Brain microvascular endothelial cell (primary cell): ENCODE measurements at regions of chr2 and their contacts with region 1.

Region 1: DNA sequence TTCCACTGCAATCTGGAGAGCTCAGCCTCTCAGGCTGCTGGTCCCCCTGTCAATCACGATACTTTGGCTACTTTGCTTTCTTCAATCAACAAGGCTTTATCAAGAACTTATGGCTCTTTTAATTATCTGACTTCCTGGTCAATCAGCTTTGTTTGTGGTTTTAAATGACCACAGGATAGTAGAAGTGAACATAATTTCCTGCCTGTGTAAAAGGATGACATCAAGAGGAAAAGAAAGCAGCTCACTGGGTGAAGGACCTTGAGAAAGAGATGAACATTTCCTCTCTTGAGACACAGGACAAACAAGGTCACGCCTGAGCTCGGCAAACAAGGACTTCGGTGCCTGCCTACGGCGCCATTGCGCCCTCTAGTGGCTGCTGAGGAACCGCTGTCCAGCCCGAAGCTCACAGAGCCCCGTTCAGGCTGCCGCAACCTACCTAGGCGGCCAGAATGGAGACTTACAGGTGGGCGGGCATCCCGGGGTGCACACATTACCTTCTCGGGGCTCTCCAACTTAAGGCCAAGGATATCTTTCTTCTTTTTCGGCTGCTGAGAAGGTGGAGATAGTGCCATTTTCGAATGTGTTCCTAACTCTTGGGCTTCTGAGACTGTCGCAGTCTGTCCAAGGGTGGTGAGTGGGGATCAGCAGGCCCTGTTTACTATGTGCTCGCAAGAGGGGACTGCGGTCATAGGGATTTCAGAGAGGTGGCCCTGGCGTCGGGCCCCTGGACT is 54.0 kb downstream of the IL1RL2 start:
- DNase-seq: peak; percentile 92
- H3K4me3 ChIP-seq: no peak overlapping the region
- H3K27ac ChIP-seq: peak overlapping the region; percentile 70
- H3K27me3 ChIP-seq: no peaks in the 10 kb centered on the region
- CTCF ChIP-seq: peak; percentile 99

Region 2: GRCh38 chr2:101679037-101679726 is 561.6 kb before region 1 on chr2:
- in situ Hi-C with region 1: no loop called
- DNase-seq: peak; percentile 88
- H3K4me3 ChIP-seq: no peak overlapping the region
- H3K27ac ChIP-seq: peak overlapping the region; percentile 23
- H3K27me3 ChIP-seq: no peaks in the 10 kb centered on the region
- CTCF ChIP-seq: no peak

Region 3: GRCh38 chr2:102005989-102006885 is 234.6 kb before region 1 on chr2:
- in situ Hi-C with region 1: loop called (anchors 10 kb)
- DNase-seq: peak; percentile 50
- H3K4me3 ChIP-seq: no peak overlapping the region
- H3K27ac ChIP-seq: no peak overlapping the region
- H3K27me3 ChIP-seq: no peaks in the 10 kb centered on the region
- CTCF ChIP-seq: peak; percentile 83

Region 4: GRCh38 chr2:102355526-102356380 is 114.9 kb after region 1 on chr2 and contains the start of gene IL18R1:
- in situ Hi-C with region 1: loop called (anchors 10 kb)
- DNase-seq: peak; percentile 46
- H3K4me3 ChIP-seq: peak within 1 kb of the TSS; percentile 69
- H3K27ac ChIP-seq: no peak within 1 kb of the TSS
- H3K27me3 ChIP-seq: no peaks in the 10 kb centered on the region
- CTCF ChIP-seq: peak; percentile 54